ENCODE measurements at regions of chr22 and their contacts with region 1.

Region 1: DNA sequence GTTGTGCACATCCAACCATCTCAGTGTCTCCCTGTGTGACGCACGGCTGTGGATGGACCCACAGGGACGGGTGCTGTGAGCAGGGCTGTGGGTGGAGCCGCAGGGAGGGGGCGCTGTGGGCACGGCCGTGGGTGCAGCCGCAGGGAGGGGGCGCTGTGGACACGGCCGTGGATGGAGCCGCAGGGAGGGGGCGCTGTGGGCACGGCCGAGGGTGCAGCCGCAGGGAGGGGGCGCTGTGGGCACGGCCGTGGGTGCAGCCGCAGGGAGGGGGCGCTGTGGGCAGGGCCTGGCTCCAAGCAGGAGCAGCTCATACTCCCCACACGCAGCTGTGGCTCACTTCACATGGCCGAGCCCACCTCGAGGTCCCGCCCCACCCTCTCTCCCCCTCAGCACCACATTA is 6.0 kb upstream of the MAPK11 start:
- H3K4me3 ChIP-seq: no peak overlapping the region
- H3K27ac ChIP-seq: no peak overlapping the region
- H3K4me1 ChIP-seq: peaks cover 6% of the 10 kb centered on the region
- CTCF ChIP-seq: no peak

Region 2: GRCh38 chr22:50244420-50245213 is 31.5 kb before region 1 on chr22 and contains the start of gene TUBGCP6:
- CTCF ChIA-PET with region 1: interaction called, 13 read pairs
- POLR2A ChIA-PET with region 1: interaction called, 5 read pairs
- H3K4me3 ChIP-seq: peak within 1 kb of the TSS; percentile 97
- H3K27ac ChIP-seq: peak within 1 kb of the TSS; percentile 87
- H3K4me1 ChIP-seq: peaks cover 3% of the 10 kb centered on the region; the same call in 1 of the 2 replicates
- CTCF ChIP-seq: peak; percentile 78; the same call in 1 of the 2 replicates

Region 3: DNA sequence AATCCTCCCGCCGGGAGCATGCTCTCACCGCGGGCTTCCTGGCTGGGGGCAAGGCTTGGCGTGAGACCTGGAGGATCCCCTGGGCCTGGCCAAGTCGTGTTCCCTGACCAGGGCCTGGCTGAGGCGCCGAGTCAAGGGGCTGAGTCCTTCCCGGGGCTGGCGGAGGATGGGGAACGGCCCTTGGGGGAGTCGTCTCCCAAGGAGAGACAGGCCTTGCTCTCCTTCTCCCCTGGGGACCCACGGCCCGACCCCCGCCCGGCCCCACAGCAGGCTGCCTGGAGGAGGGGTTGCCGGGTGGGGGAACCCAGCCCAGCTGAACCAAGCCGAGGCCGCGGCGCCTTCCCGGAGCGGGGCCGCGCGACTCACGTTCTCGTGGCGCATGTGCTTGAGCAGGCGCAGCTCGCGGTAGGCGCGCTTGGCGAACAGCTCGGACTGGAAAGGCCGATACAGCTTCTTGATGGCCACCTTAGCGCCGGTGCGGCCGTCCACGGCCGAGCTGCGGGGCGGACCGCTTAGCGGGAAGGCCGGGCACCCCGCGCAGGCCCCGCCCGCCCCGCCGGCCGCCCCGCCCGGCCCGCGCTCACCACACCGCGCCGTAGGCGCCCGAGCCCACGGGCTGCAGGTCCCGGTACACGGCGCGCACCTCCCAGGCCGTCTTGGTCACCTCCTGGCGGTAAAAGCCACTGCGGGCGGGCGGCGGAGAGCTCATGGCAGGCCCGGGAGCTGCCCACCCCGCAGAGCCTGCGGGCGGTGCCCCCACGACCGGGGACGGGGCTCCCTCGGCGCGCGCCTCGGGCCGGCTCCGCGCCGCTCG is 15.1 kb before region 1 on chr22:
- CTCF ChIA-PET with region 1: interaction called, 10 read pairs
- POLR2A ChIA-PET with region 1: interaction called, 12 read pairs
- H3K4me3 ChIP-seq: peak overlapping the region; percentile 59
- H3K27ac ChIP-seq: peak overlapping the region; percentile 87; the same call in 1 of the 2 replicates
- H3K4me1 ChIP-seq: peaks cover 11% of the 10 kb centered on the region
- CTCF ChIP-seq: no peak

Region 4: DNA sequence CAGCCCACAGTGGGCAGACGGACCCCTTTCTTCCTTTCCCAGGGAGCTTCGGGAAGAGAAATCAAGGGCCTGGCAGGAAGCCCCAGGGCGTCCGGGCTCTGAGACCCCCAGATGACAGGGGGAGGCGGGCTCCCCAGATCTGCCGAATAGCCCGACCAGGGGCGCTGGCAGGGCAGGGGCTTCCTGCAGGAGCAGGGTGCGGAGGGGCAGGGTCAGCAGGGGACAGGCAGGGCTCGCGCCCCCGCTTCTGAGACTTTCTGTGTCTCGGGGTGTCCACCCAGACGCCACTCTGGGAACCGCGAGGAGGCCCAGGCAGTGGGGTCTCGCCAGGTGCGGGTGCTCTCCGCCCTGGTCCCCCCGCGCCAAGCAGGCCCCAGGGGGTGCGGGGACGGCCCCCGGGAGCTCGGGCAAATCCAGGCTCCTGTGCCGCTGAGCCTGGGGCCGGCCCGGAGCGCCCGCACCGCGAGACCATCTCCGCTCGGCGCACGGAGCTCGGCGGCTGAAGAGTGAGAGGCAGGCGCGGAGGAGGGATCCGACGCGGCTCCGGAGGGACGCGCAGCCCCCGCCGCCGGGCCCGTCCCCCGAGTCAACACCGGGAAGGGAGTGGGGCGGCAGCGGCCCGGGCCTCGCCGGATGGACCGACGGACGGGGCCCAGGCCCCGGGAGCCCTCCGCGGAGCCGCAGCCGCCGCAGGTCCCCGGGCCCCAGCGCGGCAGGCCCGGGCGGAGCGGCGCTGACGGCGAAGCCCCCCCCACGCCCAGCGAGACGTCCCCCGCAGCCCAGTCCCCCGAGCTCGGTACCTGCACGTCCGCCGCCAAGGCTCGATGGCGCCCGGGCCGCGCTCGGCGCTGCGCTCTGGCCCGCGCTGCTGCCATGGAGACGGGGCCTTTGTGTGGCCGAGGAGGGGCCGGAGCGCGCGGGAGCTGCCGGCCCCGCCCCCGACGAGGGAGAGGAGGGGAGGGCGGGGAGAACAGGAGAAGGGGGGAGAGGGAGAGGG is 30.9 kb after region 1 on chr22 and contains the start of gene PLXNB2:
- CTCF ChIA-PET with region 1: interaction called, 18 read pairs
- POLR2A ChIA-PET with region 1: interaction called, 8 read pairs
- H3K4me3 ChIP-seq: peak within 1 kb of the TSS; percentile 89
- H3K27ac ChIP-seq: peak within 1 kb of the TSS; percentile 98
- H3K4me1 ChIP-seq: peaks cover 21% of the 10 kb centered on the region
- CTCF ChIP-seq: no peak

Region 5: DNA sequence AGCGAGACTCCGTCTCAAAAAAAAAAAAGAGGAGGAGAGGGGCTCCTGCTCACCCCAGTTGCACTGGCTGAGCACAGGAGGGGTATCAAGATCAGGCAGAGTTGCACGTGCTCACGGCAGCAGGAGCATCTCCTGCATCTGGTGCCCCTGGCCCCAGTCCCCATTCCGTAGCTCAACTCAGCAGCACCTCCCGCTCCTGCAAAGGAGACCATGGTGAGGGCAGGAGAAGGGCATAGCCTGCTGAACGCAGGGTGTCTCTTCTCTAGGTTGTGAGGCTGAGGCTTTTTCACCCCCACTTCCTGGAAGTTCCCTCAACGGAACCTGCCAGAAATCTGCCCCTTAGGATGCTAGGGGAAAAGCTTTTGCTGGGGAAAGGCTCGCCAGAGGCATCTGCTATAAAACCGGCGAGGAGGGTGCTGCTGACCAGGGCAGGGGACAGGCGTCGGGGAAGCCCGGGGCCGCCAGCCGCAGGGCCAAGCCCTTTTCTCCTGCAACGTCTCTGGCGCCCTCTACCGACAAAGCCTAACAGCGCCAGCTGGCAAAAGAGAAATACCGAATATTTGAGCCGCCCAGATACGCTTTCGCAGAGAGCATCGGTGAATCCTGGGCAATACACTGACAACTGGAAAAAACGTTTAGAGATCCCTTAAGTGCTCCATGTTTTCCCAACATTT is 66.0 kb after region 1 on chr22:
- CTCF ChIA-PET with region 1: interaction called, 42 read pairs
- POLR2A ChIA-PET with region 1: interaction called, 7 read pairs
- H3K4me3 ChIP-seq: peak overlapping the region; percentile 33
- H3K27ac ChIP-seq: peak overlapping the region; percentile 95
- H3K4me1 ChIP-seq: no peaks in the 10 kb centered on the region
- CTCF ChIP-seq: peak; percentile 97

Measured in HEK293 (cell line).